ENCODE measurements at regions of chr2 and their contacts with region 1.

Region 1: DNA sequence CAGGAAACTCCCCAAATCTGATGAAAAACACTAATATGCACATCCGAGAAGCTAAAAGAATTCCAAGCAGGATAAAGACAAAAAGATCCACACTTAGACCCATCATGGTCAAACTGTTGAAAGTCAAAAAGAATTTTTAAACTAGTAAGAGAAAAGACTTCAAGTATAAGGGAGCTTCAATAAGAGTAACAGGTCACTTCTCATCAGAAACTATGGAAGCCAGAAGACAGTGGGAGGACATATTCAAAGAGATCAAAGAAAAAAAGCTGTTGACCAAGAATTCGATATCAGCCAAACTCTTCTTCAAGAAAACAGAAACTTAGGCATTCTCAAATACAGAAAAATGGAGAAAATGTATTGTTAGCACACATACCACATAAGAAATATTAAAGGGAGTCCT is 50.4 kb downstream of the ZC3H8 start:
- DNase-seq: no peak
- H3K4me3 ChIP-seq: no peak overlapping the region
- CTCF ChIP-seq: no peak

Region 2: DNA sequence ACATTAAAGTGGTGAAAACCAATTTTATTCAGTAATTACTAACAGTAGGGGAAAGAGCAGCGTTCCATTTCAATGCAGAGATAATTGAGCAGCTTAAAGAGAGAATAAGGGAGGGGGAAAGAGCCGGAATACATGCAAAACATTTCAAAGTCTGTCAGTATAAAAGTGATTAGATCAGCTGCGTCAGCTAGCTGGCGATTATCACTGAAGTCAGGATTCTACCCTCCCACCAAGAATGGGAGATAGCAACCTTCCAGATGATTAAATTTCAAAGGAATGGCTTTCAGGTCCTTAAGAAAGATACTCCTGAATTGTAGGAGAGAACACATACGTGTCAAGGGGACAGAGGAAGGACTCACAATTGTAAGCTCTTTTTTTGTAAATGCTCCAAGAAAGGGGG is 68.3 kb after region 1 on chr2:
- in situ Hi-C with region 1: no loop called
- DNase-seq: no peak
- H3K4me3 ChIP-seq: no peak overlapping the region
- CTCF ChIP-seq: no peak

Region 3: GRCh38 chr2:112301171-112301584 is 96.8 kb after region 1 on chr2:
- in situ Hi-C with region 1: loop called (anchors 5 kb)
- DNase-seq: peak; percentile 34
- H3K4me3 ChIP-seq: no peak overlapping the region
- CTCF ChIP-seq: no peak

Measured in astrocyte of the cerebellum (primary cell).